ENCODE measurements at regions of chr5 and their contacts with region 1.

Region 1: DNA sequence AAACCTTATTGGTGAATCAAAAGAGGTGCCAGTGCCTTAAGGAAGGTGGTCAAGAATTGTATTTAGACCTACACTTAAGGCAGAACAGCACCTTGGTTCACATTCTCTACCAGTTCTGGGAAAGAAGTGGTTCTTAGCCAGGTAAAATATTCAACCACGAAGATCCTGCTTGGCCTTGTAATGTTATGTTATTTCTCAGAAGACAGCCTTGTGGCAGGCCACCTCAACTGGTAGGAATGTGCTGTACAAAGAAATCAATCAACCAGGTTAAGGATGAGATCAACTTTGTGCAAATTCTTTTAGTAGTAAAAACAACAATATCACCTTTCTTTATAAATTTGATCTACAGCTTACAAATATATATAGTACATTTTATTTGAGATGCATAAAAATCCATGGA is 246.8 kb downstream of the ARRDC3 start:
- DNase-seq: no peak

Region 2: DNA sequence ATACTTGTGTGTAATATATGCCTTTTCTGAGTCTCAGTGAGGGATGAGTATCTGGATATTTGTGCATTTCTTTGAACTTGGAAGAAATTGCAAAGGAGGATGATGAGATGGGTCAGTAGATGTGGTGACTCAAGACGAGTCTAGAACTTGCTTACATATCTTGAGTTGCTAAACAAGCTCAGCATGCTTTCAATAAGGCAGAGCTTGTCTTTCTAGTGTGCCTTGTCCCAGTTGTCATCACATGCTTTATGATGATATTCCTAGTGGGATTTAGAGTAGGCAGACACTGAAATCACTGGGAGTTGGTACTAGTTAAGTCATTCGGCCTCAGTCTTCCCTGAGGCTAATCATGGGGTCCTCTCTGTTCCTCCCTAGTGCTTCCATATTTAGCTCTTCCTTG is 24.5 kb after region 1 on chr5:
- intact Hi-C with region 1: no loop called
- DNase-seq: no peak

Region 3: GRCh38 chr5:91957666-91958065 is 821.4 kb after region 1 on chr5:
- intact Hi-C with region 1: loop called in 1 of 2 experiments (anchors 5 kb)
- DNase-seq: peak; percentile 80

Measured in posterior vena cava (tissue), 2 donors.